Transverse colon (tissue), 4 donors: ENCODE measurements at regions of chr1 and their contacts with region 1.

Region 1: DNA sequence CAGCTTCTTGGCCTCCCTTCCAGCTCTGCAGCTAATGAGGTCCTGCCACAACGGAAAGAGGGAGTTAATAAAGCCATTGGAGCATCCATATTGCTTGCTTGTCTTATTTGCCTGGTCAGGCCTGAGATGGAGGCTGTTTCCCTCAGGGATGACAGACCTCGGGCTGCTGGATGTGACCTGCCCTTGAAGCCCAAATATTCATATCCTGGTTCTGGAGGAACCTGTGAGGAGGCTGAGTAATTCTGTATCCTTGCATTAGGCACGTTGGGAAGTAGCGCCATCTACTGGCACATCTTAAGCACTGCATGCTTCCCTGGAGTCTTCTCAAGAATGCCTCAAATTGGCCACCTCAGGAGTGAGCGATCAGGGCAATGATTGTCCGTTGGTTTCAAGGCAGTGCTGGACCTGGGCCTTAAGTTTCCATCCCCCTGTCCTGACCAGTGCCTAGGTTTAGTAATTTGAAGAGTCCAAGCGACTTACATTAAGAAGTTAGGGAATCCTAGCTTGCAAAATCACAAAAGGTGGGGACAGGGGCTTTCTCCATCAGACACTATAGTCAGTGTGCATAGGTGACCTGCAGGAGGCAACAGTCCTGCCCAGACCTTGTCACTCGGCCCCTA is 13.8 kb upstream of the NASP start:
- DNase-seq: peak; percentile 76
- H3K4me3 ChIP-seq: no peak overlapping the region
- H3K27ac ChIP-seq: no peak overlapping the region
- H3K4me1 ChIP-seq: peaks cover 0 to 6% (median 2%) of the 10 kb centered on the region in 4 donors
- H3K27me3 ChIP-seq: no peaks in the 10 kb centered on the region
- CTCF ChIP-seq: peak; percentile 95 to 99 (median 97)
- EP300 ChIP-seq: no peak
- POLR2A ChIP-seq: no peak

Region 2: GRCh38 chr1:45339789-45340570 is 230.1 kb before region 1 on chr1 and contains the starts of genes MUTYH and TOE1:
- in situ Hi-C with region 1: loop called in 1 of 4 experiments (anchors 10 kb)
- intact Hi-C with region 1: no loop called
- DNase-seq: peak; percentile 95
- H3K4me3 ChIP-seq: peak within 1 kb of the TSS; percentile 60 to 89 (median 68)
- H3K27ac ChIP-seq: peak within 1 kb of the TSS; percentile 90 to 98 (median 96)
- H3K4me1 ChIP-seq: peaks cover 9 to 57% (median 43%) of the 10 kb centered on the region in 4 donors
- H3K27me3 ChIP-seq: no peaks in the 10 kb centered on the region
- CTCF ChIP-seq: no peak
- EP300 ChIP-seq: no peak
- POLR2A ChIP-seq: peak; percentile 94
- total RNA-seq, gene MUTYH: 28.7 to 78.2 (median 49.0) TPM
- total RNA-seq, gene TOE1: 4.8 to 58.7 (median 16.4) TPM

Region 3: DNA sequence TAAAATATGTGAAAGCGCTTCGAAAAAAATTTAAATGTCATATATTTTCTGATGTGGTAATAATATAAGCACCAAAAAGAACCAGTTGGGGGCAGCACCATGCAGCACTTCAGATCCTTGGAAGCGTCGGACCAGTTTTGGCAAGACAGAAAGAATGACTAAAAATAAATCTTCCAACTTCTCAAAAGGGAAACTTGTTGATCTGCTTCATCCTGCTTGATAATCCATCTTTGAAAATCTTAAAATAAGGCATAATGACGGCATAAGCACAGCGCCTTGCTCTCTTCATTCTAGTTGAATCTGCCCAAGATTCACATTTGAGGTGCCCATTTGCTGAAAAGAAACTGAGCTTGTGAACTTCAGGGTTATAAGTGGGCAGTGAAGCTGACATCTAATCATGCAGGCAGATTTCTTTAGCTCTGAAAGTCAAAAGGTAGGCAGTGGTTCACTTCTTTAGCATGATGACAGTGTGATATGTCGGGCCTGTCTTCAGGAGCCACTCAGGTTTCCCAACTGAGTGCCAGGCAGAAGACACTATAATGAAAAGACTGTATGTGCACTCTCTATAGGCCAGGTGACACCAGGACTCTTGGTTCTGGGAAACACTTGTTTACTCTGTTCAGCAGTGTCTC is 210.1 kb before region 1 on chr1:
- in situ Hi-C with region 1: loop called in 1 of 4 experiments (anchors 10 kb)
- intact Hi-C with region 1: loop called (anchors 5 kb)
- DNase-seq: peak; percentile 71
- H3K4me3 ChIP-seq: no peak overlapping the region
- H3K27ac ChIP-seq: peak overlapping the region; percentile 73 to 76 (median 74)
- H3K4me1 ChIP-seq: peaks cover 9 to 22% (median 15%) of the 10 kb centered on the region in 4 donors
- H3K27me3 ChIP-seq: no peaks in the 10 kb centered on the region
- CTCF ChIP-seq: peak; percentile 67 to 85 (median 71)
- EP300 ChIP-seq: no peak
- POLR2A ChIP-seq: no peak

Region 4: DNA sequence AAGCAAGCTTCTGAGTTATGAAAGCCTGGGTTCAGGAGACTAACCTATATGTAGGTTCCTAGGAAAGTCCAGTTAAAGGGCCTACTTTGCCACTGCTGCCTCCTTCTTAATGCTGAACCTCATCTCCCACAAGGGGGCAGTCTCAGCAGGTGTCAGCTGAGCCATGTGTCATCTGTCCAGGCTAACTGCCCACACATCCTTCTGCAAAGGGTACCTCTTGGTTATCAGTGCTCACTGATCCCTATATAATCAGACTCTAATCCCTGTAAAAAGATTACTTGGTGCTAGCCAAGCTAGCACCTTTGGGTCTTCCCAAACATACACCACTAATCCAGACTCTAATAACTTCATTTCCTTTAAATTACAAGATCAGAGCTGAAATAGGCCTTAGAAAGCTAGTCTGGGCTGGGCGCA is 57.4 kb before region 1 on chr1:
- in situ Hi-C with region 1: loop called (anchors 5 to 10 kb)
- intact Hi-C with region 1: no loop called
- DNase-seq: peak; percentile 66
- H3K4me3 ChIP-seq: no peak overlapping the region
- H3K27ac ChIP-seq: no peak overlapping the region
- H3K4me1 ChIP-seq: peaks cover 13 to 27% (median 21%) of the 10 kb centered on the region in 4 donors
- H3K27me3 ChIP-seq: no peaks in the 10 kb centered on the region
- CTCF ChIP-seq: peak; percentile 60 to 74 (median 63)
- EP300 ChIP-seq: no peak
- POLR2A ChIP-seq: no peak